ENCODE measurements at regions of chr2 and their contacts with region 1.

Region 1: DNA sequence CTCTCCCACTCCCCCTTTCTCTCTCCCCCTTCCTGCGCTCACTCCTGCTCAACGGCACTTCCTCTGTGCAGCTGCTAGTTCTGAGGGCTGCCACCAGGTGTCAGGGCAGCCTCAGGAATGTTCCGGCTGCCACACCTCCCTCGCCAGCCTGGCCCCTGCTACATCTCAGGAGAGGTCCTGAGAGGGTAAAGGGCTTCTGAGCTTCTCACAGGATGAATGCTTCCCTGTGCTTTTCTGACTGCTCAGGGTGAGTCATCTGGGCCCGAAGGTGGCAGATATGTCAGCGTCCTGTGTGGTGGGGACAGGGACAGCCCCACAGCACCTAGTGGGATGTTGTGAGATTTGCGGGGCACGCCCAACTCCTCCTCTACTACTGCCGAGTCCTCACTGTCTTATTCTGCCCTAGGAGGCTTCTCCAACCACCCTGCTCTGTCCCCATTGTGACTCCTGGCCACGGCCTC is 49.0 kb downstream of the PLEKHB2 start:
- DNase-seq: peak; percentile 90
- H3K4me3 Mint-ChIP-seq: peak overlapping the region; percentile 2
- H3K27ac Mint-ChIP-seq: no peak overlapping the region
- H3K4me1 Mint-ChIP-seq: peaks cover 21% of the 10 kb centered on the region
- H3K27me3 Mint-ChIP-seq: no peaks in the 10 kb centered on the region

Region 2: DNA sequence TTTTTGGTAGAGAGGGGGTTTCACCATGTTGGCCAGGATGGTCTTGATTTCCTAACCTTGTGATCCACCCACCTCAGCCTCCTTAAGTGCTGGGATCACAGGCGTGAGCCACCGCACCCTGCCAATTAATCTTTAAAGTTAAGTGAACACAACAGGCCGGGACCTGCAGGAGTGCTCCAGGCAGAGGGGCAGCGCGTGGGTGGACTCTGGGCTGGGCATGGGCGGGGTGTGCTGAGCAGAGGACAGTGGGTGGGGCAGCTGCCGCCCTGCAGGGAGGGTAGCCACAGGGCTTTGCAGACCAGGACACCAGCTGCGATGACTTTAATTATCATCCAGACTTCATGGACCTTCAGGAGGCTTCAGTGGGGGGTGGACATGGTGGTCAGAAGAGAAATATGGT is 434.1 kb before region 1 on chr2:
- intact Hi-C with region 1: no loop called
- DNase-seq: peak; percentile 23
- H3K4me3 Mint-ChIP-seq: no peak overlapping the region
- H3K27ac Mint-ChIP-seq: no peak overlapping the region
- H3K4me1 Mint-ChIP-seq: no peaks in the 10 kb centered on the region
- H3K27me3 Mint-ChIP-seq: peaks cover 9% of the 10 kb centered on the region

Region 3: DNA sequence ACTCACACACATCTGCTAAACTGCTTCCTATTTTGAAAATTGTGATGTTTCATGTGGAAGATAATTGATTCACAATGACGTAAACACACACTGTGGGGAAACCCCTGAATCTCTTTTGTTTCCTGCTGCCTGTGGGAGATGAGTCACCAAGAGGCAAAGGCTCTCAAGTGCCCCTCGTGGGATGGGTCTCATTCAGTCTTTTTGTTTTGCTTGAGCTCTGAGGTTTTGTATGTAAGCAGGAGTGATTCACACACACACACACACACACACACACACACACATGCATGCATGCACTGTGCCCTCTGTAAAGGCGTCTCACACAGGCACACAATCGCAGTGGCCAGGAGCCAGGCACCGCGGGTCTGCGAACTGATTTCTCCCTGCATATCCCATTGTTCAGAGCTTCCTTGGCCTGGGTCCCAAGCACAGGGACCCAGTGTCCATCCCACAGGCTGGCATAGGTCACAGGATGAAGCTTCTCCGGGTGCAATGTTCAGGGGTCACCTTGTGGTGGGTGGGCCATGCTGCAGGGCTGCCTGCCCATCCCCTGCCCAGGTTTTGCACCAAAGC is 329.5 kb before region 1 on chr2:
- intact Hi-C with region 1: loop called (anchors 2 kb)
- DNase-seq: peak; percentile 92
- H3K4me3 Mint-ChIP-seq: peak overlapping the region; percentile 71
- H3K27ac Mint-ChIP-seq: peak overlapping the region; percentile 89
- H3K4me1 Mint-ChIP-seq: peaks cover 20% of the 10 kb centered on the region
- H3K27me3 Mint-ChIP-seq: peaks cover 21% of the 10 kb centered on the region

Region 4: DNA sequence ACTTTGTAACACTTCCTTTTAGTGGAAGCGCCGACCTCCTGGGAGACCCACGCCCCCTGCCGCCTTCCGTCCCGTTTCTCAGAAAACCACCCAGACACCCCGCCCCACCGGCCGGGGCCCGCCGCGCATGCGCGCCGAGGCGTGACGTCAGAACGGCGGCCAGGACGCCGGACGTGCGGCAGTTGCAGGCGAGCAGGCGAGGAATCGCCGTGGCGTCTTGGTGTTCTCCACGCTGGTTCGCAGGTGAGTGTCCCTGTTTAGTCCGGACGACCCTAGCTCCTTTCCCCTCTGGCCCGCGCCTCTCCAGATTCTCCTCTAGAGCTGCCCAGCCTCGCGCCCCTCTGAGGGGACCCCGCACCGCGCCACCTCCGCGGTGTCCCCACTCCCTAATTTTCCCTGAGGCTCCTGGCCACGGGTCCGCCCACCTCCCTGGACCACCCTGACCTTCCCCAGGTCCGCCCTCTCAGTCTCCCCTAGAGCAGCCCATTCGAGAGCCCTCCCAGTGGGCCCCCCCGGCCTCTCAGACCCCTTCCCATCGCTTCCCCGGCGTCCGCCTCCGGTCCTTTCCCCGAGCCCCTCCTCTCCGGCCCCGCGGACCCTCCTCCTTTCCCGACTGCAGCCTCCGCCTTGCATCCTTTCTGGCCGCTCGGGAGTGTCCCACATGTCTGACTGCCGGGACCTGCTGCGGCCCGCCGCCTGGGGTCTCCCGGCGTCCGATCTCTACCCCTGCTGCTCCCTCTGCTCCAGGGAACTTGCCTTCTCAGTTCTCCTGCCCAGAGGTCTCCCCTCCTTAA is 48.7 kb before region 1 on chr2 and contains the start of gene PLEKHB2:
- intact Hi-C with region 1: loop called (anchors 1 kb)
- DNase-seq: peak; percentile 99
- H3K4me3 Mint-ChIP-seq: peak within 1 kb of the TSS; percentile 92
- H3K27ac Mint-ChIP-seq: peak within 1 kb of the TSS; percentile 95
- H3K4me1 Mint-ChIP-seq: peaks cover 44% of the 10 kb centered on the region
- H3K27me3 Mint-ChIP-seq: no peaks in the 10 kb centered on the region
- total RNA-seq, gene PLEKHB2: 62.4 and 66.7 TPM in 2 replicates

Region 5: DNA sequence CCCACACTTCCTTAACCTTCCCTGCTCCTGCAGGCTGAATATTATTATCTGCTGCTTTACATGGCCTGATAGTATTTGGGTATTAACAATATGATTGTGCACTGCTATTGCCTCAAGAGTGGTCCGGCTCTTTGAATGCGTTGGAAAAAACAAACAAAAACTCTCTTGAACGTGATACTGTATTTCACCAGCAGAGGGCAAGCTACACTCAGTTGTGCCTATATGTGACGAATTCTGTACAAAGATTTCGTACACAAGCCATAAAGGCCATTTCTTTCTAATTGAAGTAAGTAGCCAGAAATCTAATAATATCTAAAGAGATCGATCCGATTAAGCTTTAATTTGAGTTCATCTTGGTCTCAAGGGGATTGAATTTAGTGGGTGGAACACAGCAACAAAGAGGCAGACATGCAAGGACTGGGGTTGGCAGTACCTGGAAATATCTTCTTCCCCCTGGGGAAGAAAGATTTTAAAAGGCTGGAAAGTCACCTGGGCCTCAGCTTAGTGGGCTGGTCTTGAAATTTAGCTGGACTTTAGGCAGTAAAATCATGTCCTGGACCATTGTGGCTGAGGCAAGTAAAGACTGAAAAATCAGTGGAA is 259.1 kb after region 1 on chr2:
- intact Hi-C with region 1: loop called (anchors 2 kb)
- DNase-seq: peak; percentile 82
- H3K4me3 Mint-ChIP-seq: no peak overlapping the region
- H3K27ac Mint-ChIP-seq: no peak overlapping the region
- H3K4me1 Mint-ChIP-seq: peaks cover 9% of the 10 kb centered on the region
- H3K27me3 Mint-ChIP-seq: peaks cover 44% of the 10 kb centered on the region

Region 6: DNA sequence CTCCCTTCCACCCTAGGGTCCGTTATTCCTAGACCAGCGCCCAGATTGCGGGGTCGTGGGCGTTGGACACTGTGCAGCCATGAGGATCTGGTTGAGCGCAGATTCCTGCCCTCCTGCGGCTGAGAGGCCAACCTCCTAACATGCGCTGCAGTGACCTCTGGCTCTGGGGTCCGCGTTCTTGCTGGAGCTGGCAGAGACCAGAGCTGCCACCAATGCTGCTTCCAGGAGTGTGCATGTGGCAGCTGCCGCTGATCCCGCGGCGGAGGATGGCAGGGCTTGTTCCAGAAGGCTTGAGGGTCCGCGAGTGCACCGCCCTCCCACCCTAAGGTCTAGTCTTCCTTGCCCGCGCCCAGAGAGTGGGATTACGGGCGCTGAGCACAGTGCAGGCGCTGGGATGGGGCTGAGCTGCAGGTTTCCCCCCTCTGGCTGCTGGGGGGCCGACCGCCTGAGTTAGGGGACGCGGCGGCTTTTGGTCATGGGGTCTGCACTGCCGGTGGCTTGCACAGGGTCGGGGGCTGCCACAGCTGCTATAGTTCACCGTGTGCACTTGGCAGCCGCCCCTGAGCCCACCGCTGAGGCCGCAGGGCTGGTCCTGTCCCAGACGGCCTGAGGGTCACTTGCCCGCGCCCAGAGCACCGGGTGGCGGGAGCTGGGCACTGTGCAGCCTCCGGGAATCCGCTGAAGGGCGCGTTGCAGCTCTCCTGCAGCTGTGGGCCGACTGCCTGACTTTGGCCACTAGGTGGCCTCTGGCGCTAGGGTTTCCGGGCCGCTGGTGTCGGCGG is 519.5 kb after region 1 on chr2:
- intact Hi-C with region 1: loop called (anchors 1 kb)
- DNase-seq: peak; percentile 91
- H3K4me3 Mint-ChIP-seq: peak overlapping the region; percentile 23
- H3K27ac Mint-ChIP-seq: no peak overlapping the region
- H3K4me1 Mint-ChIP-seq: peaks cover 5% of the 10 kb centered on the region
- H3K27me3 Mint-ChIP-seq: peaks cover 39% of the 10 kb centered on the region

Region 7: GRCh38 chr2:131801210-131801744 is 647.2 kb after region 1 on chr2:
- intact Hi-C with region 1: loop called (anchors 1 kb)
- DNase-seq: no peak
- H3K4me3 Mint-ChIP-seq: no peak overlapping the region
- H3K27ac Mint-ChIP-seq: no peak overlapping the region
- H3K4me1 Mint-ChIP-seq: peaks cover 3% of the 10 kb centered on the region
- H3K27me3 Mint-ChIP-seq: peaks cover 15% of the 10 kb centered on the region

Measured in activated CD4-positive, alpha-beta T cell treated with anti-CD3 and anti-CD28 coated beads, Interleukin-2, amount 10 ng/mL, durations not matched to agents 24 days and 14 days (primary cell).